ENCODE measurements at regions of chr13 and their contacts with region 1.

Region 1: DNA sequence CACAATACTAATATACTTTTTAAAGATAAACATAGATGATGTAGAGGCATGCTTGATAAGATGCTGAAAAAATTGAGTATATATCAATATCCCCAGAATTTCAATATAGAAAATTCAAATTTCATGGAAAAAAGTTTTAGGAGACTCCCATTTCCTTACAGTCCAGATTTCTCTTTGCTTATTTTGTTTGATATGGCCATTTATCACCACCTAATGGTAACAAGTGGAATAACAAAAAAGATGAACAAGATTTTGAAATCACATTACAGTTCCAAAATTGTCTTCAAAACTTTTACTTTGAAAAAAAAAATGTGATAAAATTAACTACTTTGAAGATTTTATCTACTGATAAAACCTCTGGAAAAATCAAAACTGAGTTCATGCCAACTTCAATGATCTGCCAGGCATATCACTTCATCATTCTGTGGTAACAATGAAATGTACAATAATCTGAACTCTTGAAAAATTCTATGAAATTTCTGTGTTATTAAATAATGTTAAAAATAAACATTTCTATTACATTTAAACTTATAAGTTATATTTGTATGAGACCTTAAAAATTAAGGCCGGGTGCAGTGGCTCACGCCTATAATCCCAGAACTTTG is 17.5 kb downstream of the MIPEP start:
- DNase-seq: no peak
- ATAC-seq: peak in 2 of 4 donors; percentile 17 to 41
- H3K4me3 ChIP-seq: no peak overlapping the region
- H3K27ac ChIP-seq: no peak overlapping the region
- H3K4me1 ChIP-seq: peaks cover 0 to 8% (median 0%) of the 10 kb centered on the region in 12 donors
- H3K27me3 ChIP-seq: no peaks in the 10 kb centered on the region
- CTCF ChIP-seq: peak; percentile 54 to 74 (median 64)
- POLR2A ChIP-seq: no peak

Region 2: DNA sequence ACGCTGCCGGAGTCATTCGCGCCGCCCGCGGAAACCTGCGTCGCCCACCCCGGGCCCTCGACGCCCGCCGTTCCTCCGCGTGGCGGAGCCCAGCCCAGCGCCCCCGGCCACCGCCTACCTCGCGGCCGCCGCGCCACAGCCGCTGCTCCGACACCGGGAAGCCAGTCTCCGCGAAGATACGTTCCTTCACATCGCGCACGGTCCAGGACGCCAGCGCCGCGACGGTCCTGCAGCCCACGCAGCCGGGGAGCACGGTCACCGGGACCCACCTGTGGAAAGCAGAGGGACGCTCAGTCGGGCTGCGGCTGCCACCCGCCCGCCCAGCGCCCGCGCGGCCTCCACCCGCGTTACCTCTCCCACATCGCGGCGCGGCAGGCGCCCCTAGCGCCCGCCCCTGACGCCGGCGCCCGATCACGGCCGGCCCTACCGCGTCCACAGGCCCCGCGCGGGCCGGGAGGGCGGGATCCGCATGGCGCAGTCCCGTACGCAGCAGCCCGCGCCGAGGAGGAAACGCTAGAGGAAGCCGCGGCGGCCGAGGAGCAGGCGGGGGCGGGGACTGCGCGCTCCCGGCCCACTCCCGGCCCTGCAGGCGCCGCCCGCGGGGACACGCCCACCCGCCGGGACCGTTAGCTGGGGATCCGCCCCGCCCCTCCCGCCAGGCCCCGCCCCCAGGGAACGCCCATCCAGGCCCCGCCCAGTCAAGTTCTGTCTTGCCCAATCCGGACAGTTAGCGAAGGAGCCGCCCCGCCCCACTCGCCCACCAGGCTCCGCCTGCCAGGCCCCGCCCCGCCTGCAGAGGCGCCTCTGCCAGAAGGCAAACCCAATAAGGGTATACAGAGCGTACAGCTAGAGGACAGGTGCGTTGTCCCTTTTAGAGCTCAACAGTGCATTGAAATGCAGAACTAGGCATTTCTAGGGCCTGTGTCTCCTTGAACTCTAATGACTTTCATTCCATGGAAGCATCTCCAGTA is 496.4 kb before region 1 on chr13:
- intact Hi-C with region 1: loop called in 1 of 10 experiments (anchors 10 kb)
- DNase-seq: peak; percentile 97 to 99 (median 98)
- ATAC-seq: peak; percentile 94 to 97 (median 96)
- H3K4me3 ChIP-seq: peak overlapping the region; percentile 64 to 93 (median 84)
- H3K27ac ChIP-seq: peak overlapping the region; percentile 48 to 96 (median 90)
- H3K4me1 ChIP-seq: peaks cover 3 to 57% (median 46%) of the 10 kb centered on the region in 12 donors
- H3K27me3 ChIP-seq: no peaks in the 10 kb centered on the region
- CTCF ChIP-seq: peak in 8 of 12 donors; percentile 11 to 56 (median 36)
- POLR2A ChIP-seq: peak in 1 of 2 donors; percentile 69

Region 3: GRCh38 chr13:23570099-23570920 is 301.4 kb before region 1 on chr13 and contains the start of gene TNFRSF19:
- intact Hi-C with region 1: loop called in 9 of 10 experiments (anchors 5 to 10 kb)
- DNase-seq: peak in 4 of 5 donors; percentile 62 to 84 (median 70)
- ATAC-seq: peak; percentile 68 to 93 (median 86)
- H3K4me3 ChIP-seq: peak within 1 kb of the TSS; percentile 18 to 63 (median 54)
- H3K27ac ChIP-seq: peak within 1 kb of the TSS; percentile 58 to 86 (median 73)
- H3K4me1 ChIP-seq: peaks cover 0 to 19% (median 0%) of the 10 kb centered on the region in 12 donors
- H3K27me3 ChIP-seq: no peaks in the 10 kb centered on the region
- CTCF ChIP-seq: no peak
- POLR2A ChIP-seq: no peak
- total RNA-seq, gene TNFRSF19: 12.0 to 35.7 (median 28.0) TPM

Region 4: GRCh38 chr13:23707674-23708073 is 164.0 kb before region 1 on chr13:
- intact Hi-C with region 1: loop called in 6 of 10 experiments (anchors 2 to 10 kb)
- DNase-seq: no peak
- ATAC-seq: no peak
- H3K4me3 ChIP-seq: no peak overlapping the region
- H3K27ac ChIP-seq: no peak overlapping the region
- H3K4me1 ChIP-seq: peaks cover 0 to 19% (median 8%) of the 10 kb centered on the region in 12 donors
- H3K27me3 ChIP-seq: no peaks in the 10 kb centered on the region
- CTCF ChIP-seq: peak in 7 of 12 donors; percentile 5 to 40 (median 25)
- POLR2A ChIP-seq: no peak